Caco-2 (cell line): ENCODE measurements at regions of chr11 and their contacts with region 1.

Region 1: DNA sequence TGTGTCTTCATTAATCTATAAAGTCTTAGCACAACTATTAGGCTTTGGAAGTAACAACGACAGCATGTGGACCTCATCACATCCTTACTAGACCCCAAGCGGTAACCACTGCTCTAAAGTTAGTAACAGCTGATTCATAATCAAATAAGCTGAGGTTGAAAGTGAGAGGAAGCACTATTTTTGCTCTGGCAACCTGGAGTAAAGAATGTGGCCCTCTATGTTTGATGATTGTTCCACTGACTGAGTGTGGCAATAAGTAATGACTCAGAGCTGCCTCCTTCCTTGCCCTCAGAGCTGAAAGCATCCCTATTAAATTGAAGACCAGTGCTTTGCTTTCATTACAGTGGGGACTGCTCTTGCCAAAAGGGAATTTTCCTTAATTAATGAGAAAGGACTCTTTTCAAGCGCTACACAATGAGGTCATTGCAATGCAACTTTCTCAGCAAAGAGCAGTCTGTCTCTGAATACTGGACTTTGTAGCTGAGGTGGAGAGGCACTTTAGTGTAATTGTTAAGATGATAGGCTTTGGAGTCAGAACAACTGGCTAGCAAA is 906.1 kb upstream of the RAG2 start:
- DNase-seq: peak; percentile 16 to 51
- H3K4me3 ChIP-seq: no peak overlapping the region
- H3K4me3 Mint-ChIP-seq: peak overlapping the region; percentile 31
- H3K27ac Mint-ChIP-seq: peak overlapping the region; percentile 4
- H3K4me1 ChIP-seq: peaks cover 59% of the 10 kb centered on the region
- H3K4me1 Mint-ChIP-seq: peaks cover 23% of the 10 kb centered on the region
- H3K27me3 ChIP-seq: no peaks in the 10 kb centered on the region
- H3K27me3 Mint-ChIP-seq: no peaks in the 10 kb centered on the region
- CTCF ChIP-seq: no peak

Region 2: DNA sequence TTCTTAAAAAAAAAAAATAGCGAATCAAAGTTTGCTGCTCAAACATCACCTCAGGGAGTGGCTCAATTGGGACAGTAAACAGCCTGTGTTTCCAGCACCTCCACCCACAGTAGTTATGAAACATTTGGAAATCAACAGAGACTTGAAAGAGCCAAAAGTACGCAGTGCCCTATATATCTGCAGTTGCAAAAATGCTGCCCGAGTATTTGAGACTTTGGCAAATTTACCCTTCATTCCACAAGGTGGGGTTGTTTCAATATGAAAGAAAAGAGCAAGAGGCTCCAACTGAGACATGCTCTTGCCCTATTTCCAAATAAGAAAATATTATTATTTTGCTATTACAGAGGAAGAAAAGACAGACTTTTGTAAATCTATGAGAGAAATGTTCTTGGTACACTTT is 55.0 kb before region 1 on chr11:
- CTCF ChIA-PET with region 1: no interaction called
- POLR2A ChIA-PET with region 1: no interaction called
- intact Hi-C with region 1: loop called (anchors 2 kb)
- DNase-seq: peak in 1 of 2 experiments; percentile 47
- H3K4me3 ChIP-seq: no peak overlapping the region
- H3K4me3 Mint-ChIP-seq: no peak overlapping the region
- H3K27ac Mint-ChIP-seq: no peak overlapping the region
- H3K4me1 ChIP-seq: peaks cover 13% of the 10 kb centered on the region
- H3K4me1 Mint-ChIP-seq: no peaks in the 10 kb centered on the region
- H3K27me3 ChIP-seq: no peaks in the 10 kb centered on the region
- H3K27me3 Mint-ChIP-seq: no peaks in the 10 kb centered on the region
- CTCF ChIP-seq: peak in 1 of 2 experiments; percentile 50

Region 3: DNA sequence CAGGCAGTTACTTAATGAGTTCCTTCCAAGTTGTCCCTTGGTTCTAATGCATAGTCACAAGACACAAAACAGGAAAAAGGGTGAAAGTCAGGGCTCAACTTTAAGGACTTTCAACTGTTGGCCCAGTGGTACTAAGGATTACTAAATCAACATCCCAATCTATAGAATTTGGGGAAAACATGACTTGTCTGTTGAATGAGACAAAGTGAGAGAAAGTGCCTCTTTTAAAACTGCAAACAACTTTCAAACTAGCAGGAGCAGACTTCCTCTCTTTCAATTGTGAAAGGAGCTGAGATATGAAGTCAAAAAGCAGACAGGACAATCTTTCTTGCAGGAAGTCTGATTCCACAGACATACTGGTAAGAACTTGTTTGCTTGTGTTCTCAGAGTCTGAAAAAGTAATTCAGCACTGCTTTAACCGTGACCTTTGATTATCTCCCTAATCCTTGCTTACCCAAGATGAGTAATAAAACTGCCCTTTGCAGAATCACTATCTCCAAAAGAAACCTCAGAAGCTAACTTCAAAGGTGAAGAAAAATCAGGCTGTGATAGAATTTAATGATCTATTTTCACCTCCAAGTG is 54.6 kb after region 1 on chr11:
- CTCF ChIA-PET with region 1: no interaction called
- POLR2A ChIA-PET with region 1: no interaction called
- intact Hi-C with region 1: loop called (anchors 2 kb)
- DNase-seq: peak in 1 of 2 experiments; percentile 26
- H3K4me3 ChIP-seq: no peak overlapping the region
- H3K4me3 Mint-ChIP-seq: no peak overlapping the region
- H3K27ac Mint-ChIP-seq: no peak overlapping the region
- H3K4me1 ChIP-seq: peaks cover 15% of the 10 kb centered on the region
- H3K4me1 Mint-ChIP-seq: no peaks in the 10 kb centered on the region
- H3K27me3 ChIP-seq: no peaks in the 10 kb centered on the region
- H3K27me3 Mint-ChIP-seq: no peaks in the 10 kb centered on the region
- CTCF ChIP-seq: no peak

Region 4: GRCh38 chr11:37642296-37642695 is 138.2 kb after region 1 on chr11:
- CTCF ChIA-PET with region 1: no interaction called
- POLR2A ChIA-PET with region 1: no interaction called
- intact Hi-C with region 1: loop called (anchors 5 kb)
- DNase-seq: no peak
- H3K4me3 ChIP-seq: no peak overlapping the region
- H3K4me3 Mint-ChIP-seq: no peak overlapping the region
- H3K27ac Mint-ChIP-seq: no peak overlapping the region
- H3K4me1 ChIP-seq: no peaks in the 10 kb centered on the region
- H3K4me1 Mint-ChIP-seq: no peaks in the 10 kb centered on the region
- H3K27me3 ChIP-seq: no peaks in the 10 kb centered on the region
- H3K27me3 Mint-ChIP-seq: no peaks in the 10 kb centered on the region
- CTCF ChIP-seq: no peak